ENCODE measurements at regions of chr19 and their contacts with region 1.

Region 1: DNA sequence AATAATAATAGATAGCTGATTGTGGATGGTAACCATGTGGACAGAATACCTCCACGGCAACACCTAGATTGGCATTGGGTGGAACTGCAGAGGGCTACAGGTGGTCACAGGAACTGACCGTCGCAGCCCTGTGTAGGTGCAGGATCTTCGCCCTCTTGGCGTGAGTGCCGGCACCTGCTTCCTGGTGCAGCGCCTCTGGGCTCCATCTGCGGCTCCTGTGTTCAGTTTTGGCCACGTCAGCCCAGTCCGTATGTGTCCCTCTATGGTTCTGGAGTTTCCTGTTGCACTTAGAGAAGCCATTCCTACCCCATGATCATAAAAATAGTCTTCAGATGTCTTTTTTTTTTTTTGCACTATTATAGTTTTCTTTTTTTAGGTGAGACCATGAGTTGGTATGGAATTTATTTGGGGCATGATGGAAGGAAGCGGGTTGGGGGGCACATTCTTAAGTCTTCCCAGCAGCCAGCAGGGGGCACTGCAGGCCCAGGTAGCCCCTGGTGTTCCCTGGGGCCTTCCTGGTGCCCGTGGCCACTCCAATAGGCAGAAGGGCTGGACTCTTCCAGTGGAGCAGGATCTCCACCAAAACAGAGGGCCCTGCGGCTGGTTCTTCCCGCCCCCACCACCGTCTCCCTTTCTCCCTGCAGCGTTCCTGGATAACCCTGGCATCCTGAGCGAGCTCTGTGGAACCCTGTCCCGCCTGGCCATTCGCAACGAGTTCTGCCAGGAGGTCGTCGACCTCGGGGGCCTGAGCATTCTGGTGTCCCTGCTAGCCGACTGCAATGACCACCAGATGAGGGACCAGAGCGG is 10.1 kb upstream of the SLC25A42 start:
- DNase-seq: peak; percentile 48
- ATAC-seq: peak; percentile 85
- H3K4me3 ChIP-seq: no peak overlapping the region
- H3K27ac ChIP-seq: no peak overlapping the region
- H3K4me1 ChIP-seq: no peaks in the 10 kb centered on the region
- H3K27me3 ChIP-seq: no peaks in the 10 kb centered on the region
- CTCF ChIP-seq: peak; percentile 71
- POLR2A ChIP-seq: no peak
- RAD21 ChIP-seq: peak; percentile 86

Region 2: GRCh38 chr19:19113040-19113626 is 59.4 kb after region 1 on chr19:
- CTCF ChIA-PET with region 1: no interaction called
- POLR2A ChIA-PET with region 1: no interaction called
- dilution Hi-C with region 1: no loop called
- in situ Hi-C with region 1: no loop called
- intact Hi-C with region 1: loop called (anchors 1 kb)
- DNase-seq: peak; percentile 74
- ATAC-seq: peak; percentile 84
- H3K4me3 ChIP-seq: no peak overlapping the region
- H3K27ac ChIP-seq: no peak overlapping the region
- H3K4me1 ChIP-seq: peaks cover 20% of the 10 kb centered on the region
- H3K27me3 ChIP-seq: no peaks in the 10 kb centered on the region
- CTCF ChIP-seq: peak; percentile 57
- POLR2A ChIP-seq: no peak
- RAD21 ChIP-seq: peak; percentile 63

Region 3: GRCh38 chr19:19138169-19138981 is 84.7 kb after region 1 on chr19 and contains the start of gene TMEM161A:
- CTCF ChIA-PET with region 1: no interaction called
- POLR2A ChIA-PET with region 1: no interaction called
- dilution Hi-C with region 1: no loop called
- in situ Hi-C with region 1: no loop called
- intact Hi-C with region 1: loop called (anchors 1 kb)
- DNase-seq: peak; percentile 99
- ATAC-seq: peak; percentile 99
- H3K4me3 ChIP-seq: peak within 1 kb of the TSS; percentile 94
- H3K27ac ChIP-seq: peak within 1 kb of the TSS; percentile 78
- H3K4me1 ChIP-seq: peaks cover 6% of the 10 kb centered on the region; the same call in 1 of the 2 replicates
- H3K27me3 ChIP-seq: no peaks in the 10 kb centered on the region
- CTCF ChIP-seq: no peak
- POLR2A ChIP-seq: peak; percentile 57; the same call in 1 of the 2 replicates
- RAD21 ChIP-seq: no peak
- total RNA-seq, gene TMEM161A: 11.1 TPM in 2 replicates